ENCODE measurements at regions of chr11 and their contacts with region 1.

Region 1: GRCh38 chr11:111777094-111778046 is 11.2 kb upstream of the PPP2R1B start:
- DNase-seq: peak; percentile 8 to 53
- H3K4me3 ChIP-seq: no peak overlapping the region
- H3K27ac ChIP-seq: no peak overlapping the region
- H3K4me1 ChIP-seq: peaks cover 9% of the 10 kb centered on the region; the same call in 1 of the 2 replicates
- H3K27me3 ChIP-seq: no peaks in the 10 kb centered on the region
- CTCF ChIP-seq: peak; percentile 86

Region 2: GRCh38 chr11:111454561-111455192 is 322.7 kb before region 1 on chr11:
- CTCF ChIA-PET with region 1: interaction called, 3 read pairs
- POLR2A ChIA-PET with region 1: no interaction called
- intact Hi-C with region 1: loop called (anchors 1 kb)
- DNase-seq: peak in 1 of 2 experiments; percentile 48
- H3K4me3 ChIP-seq: no peak overlapping the region
- H3K27ac ChIP-seq: no peak overlapping the region
- H3K4me1 ChIP-seq: no peaks in the 10 kb centered on the region
- H3K27me3 ChIP-seq: no peaks in the 10 kb centered on the region
- CTCF ChIP-seq: peak; percentile 58

Region 3: GRCh38 chr11:111586388-111586831 is 191.0 kb before region 1 on chr11:
- CTCF ChIA-PET with region 1: no interaction called
- POLR2A ChIA-PET with region 1: no interaction called
- intact Hi-C with region 1: loop called (anchors 5 kb)
- DNase-seq: peak; percentile 21 to 56
- H3K4me3 ChIP-seq: no peak overlapping the region
- H3K27ac ChIP-seq: no peak overlapping the region
- H3K4me1 ChIP-seq: no peaks in the 10 kb centered on the region
- H3K27me3 ChIP-seq: no peaks in the 10 kb centered on the region
- CTCF ChIP-seq: peak; percentile 85

Region 4: DNA sequence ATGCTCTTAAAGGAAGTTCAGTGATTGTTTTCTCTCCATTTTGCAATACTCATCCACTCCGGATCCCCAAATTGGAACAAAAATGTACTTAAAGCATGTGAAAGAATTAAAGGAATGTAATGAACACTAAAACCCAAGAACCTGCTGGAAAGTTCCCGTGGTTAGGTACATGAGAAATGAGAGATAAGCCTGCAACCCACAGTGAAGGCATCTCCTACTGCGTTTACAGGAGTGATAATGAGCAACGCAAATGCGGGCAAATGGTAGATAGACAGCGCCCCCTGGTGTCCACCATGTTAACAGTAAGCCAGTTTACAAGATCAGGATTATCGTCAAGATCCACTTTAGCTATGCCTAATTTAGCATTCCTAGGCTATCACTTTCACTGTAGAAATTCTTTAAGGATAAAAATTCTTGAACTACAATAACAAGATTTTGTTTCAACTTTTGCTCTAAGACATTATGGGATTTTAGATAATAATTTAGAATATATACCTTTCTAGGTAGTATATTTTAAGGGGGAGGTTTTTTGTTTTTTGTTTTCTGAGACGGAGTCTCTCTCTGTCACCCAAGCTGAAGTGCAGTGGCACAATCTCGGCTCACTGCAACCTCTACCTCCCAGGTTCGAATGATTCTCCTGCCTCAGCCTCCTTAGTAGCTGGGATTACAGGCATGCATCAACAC is 64.1 kb after region 1 on chr11:
- CTCF ChIA-PET with region 1: no interaction called
- POLR2A ChIA-PET with region 1: no interaction called
- intact Hi-C with region 1: loop called (anchors 5 kb)
- DNase-seq: peak; percentile 72 to 84
- H3K4me3 ChIP-seq: no peak overlapping the region
- H3K27ac ChIP-seq: peak overlapping the region; percentile 50
- H3K4me1 ChIP-seq: peaks cover 79% of the 10 kb centered on the region
- H3K27me3 ChIP-seq: no peaks in the 10 kb centered on the region
- CTCF ChIP-seq: peak; percentile 98

Region 5: DNA sequence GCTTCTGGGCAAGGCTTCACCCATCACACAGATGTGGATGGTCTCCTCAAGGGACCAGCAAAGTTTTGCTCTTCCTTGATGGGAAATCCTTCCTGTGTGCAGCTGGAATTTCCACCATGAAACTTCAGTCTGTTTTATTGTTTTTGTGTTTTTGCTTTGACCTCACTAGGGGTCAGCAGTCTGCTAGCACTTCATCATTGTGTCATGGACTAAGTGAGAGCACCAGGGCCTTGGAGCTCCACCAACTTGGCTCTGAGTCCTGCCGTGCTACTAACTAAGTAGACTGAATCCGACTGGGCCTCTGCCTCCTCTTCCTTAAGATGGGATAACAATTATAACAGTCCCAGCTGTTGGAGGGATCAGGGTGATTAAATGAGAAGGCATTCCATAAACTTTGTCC is 878.0 kb after region 1 on chr11:
- CTCF ChIA-PET with region 1: no interaction called
- POLR2A ChIA-PET with region 1: no interaction called
- intact Hi-C with region 1: no loop called
- DNase-seq: peak in 1 of 2 experiments; percentile 34
- H3K4me3 ChIP-seq: no peak overlapping the region
- H3K27ac ChIP-seq: no peak overlapping the region
- H3K4me1 ChIP-seq: 0 out of 2 replicates have a peak, but pooled peaks cover 6% of the 10 kb centered on the region
- H3K27me3 ChIP-seq: no peaks in the 10 kb centered on the region
- CTCF ChIP-seq: no peak